OCI-LY7 (cell line): ENCODE measurements at regions of chr2 and their contacts with region 1.

Region 1: DNA sequence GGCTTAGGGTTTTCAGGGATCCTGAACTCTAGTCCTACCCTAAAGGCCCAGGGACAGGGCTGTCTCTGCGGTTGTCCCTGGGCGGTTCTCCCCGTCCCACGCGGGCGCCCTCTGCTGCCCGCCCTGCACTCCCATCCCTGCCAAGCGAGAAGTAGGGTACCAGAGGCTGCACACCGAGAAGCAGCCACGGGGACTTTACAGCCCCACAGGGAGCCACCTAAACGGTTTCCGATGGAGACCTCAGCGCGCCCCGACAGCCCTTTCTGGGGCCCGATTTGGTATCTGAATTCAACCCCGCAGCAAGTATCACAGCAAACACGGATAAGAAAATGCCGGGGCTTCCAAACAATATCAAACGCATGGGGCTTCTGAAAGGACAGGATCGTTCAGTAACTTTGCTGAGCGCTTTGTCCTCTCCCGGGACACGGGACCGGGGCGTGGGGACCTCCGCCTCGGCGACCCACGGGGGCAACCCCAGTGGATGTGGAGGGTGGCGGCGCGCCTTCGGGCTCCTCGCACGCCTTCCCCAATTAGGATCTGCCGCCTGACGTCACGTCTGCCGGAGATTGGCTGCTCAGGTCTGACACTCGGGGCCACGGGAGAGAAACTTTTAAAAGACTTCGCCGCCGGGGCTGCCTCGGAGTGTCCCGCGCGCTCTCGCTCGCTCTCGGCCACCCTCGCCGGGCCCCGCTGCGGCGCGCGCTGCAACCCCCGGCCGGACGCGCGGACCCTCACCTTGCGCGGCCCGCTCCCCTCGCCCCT is at the start of gene LTBP1:
- DNase-seq: peak; percentile 93
- H3K4me3 ChIP-seq: peak within 1 kb of the TSS; percentile 71
- H3K27ac ChIP-seq: peak within 1 kb of the TSS; percentile 78
- H3K4me1 ChIP-seq: peaks cover 61% of the 10 kb centered on the region
- CTCF ChIP-seq: peak; percentile 97
- total RNA-seq, gene LTBP1: 59.8 and 61.1 TPM in 2 replicates

Region 2: GRCh38 chr2:32402091-32402490 is 544.4 kb before region 1 on chr2:
- CTCF ChIA-PET with region 1: no interaction called
- POLR2A ChIA-PET with region 1: no interaction called
- intact Hi-C with region 1: no loop called
- DNase-seq: no peak
- H3K4me3 ChIP-seq: no peak overlapping the region
- H3K27ac ChIP-seq: no peak overlapping the region
- H3K4me1 ChIP-seq: no peaks in the 10 kb centered on the region
- CTCF ChIP-seq: no peak

Region 3: DNA sequence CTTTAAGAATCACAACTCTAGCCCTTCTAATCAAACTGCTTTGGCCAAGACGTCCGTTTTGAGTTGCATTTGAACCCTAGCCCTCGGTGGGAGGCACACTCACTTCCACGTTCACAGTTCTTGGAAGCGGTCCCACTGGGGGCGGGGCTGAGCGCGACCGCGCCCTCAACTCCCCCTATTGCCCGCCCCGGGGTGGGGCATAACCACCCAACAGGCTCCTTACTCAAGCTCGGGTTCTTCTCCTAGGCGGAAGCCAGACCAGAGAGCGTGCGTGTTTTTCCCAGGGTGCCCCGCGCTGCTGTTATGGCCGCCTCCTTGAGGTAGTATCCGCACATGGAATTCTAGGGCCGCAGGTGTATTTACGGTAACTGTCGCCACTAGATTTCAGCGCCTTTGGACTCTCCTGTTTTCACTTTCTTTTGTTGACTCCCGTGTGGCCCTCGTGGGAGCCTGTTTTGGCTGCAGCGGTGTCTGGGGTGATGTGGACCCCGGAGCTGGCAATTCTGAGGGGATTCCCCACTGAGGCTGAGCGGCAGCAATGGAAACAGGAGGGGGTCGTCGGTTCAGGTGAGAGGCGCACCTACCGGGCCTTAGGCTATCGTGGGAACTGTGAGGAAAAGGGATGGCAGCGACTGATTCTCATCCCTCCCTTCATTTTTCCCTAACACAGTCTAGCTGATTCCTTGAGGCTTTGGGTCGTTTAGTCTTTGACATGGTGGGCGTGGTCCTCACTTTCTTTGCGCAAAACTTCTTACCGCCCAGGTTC is 318.5 kb before region 1 on chr2 and contains the start of gene TTC27:
- CTCF ChIA-PET with region 1: no interaction called
- POLR2A ChIA-PET with region 1: no interaction called
- intact Hi-C with region 1: loop called (anchors 5 kb)
- DNase-seq: peak; percentile 95
- H3K4me3 ChIP-seq: peak within 1 kb of the TSS; percentile 99
- H3K27ac ChIP-seq: peak within 1 kb of the TSS; percentile 31
- H3K4me1 ChIP-seq: peaks cover 17% of the 10 kb centered on the region
- CTCF ChIP-seq: no peak
- total RNA-seq, gene TTC27: 20.0 and 27.7 TPM in 2 replicates

Region 4: DNA sequence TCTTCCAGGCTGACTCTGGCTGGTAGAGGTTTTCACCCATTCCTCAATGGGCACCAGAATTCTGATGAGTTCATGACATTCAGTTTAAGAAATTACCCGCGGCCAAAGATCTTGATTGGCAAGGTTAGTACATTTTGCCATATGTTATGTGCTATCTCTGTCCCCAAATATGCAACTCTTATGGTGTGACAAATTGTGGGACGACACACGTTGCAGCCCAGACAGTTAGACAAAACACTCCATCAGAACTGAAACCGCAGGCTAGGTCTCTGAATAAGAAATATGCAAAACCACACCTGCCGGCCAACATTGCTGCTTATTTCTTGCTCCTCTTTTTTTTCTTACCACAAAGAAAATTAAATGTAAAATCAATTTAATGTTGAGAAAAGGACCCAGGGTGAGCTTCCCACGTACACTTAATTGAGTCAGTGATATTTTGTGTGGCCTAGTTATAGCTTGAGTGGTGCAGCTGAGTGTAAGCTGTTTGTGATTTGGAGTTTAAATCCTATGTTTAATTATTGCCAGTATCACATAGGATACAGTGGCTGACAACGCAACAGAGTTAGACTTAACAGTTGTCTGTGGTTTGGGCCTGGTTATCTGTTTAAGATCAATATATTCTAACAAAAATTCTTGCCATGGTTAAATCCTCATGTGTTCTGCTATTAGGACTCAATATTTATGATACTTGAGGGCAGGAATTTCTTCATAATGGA is 35.5 kb before region 1 on chr2:
- CTCF ChIA-PET with region 1: no interaction called
- POLR2A ChIA-PET with region 1: interaction called, 3 read pairs
- intact Hi-C with region 1: loop called (anchors 1 kb)
- DNase-seq: peak; percentile 95
- H3K4me3 ChIP-seq: peak overlapping the region; percentile 53
- H3K27ac ChIP-seq: peak overlapping the region; percentile 97
- H3K4me1 ChIP-seq: peaks cover 70% of the 10 kb centered on the region
- CTCF ChIP-seq: no peak

Region 5: DNA sequence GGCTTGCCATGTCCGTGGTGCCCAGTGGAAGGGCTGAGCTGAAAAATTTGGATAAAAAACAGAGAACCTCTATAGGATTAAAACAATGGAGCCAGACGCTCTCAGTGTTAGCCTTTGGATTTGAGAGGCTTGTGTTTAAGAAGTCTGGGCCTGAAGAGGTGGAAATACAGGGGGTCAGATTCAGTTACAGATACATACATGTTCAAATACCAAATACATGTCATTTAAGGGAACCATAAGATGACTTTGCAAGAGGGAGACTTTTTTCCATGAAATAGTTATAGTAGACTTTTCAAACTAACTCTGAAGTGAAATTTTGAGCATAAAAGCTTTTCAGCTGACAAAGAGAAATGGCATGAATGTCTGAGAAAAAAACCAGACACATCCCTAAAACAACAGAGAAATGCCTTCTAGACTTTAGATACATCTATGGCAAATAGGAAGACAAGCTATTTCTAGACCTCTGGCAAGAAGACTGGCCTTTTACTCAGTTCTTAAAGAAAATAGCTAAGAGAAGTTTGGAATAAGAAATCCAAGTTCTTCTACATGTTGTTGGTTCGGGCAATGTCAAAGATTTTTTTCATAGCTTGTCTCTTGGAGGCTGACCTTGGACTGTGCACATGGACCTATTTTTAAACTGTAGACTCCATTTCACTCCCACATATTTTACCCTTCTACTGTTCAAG is 113.1 kb after region 1 on chr2:
- CTCF ChIA-PET with region 1: no interaction called
- POLR2A ChIA-PET with region 1: interaction called, 7 read pairs
- intact Hi-C with region 1: loop called (anchors 2 kb)
- DNase-seq: no peak
- H3K4me3 ChIP-seq: peak overlapping the region; percentile 54
- H3K27ac ChIP-seq: peak overlapping the region; percentile 91
- H3K4me1 ChIP-seq: peaks cover 65% of the 10 kb centered on the region
- CTCF ChIP-seq: no peak

Region 6: GRCh38 chr2:33275689-33276444 is 329.4 kb after region 1 on chr2:
- CTCF ChIA-PET with region 1: no interaction called
- POLR2A ChIA-PET with region 1: no interaction called
- intact Hi-C with region 1: loop called (anchors 2 kb)
- DNase-seq: no peak
- H3K4me3 ChIP-seq: no peak overlapping the region
- H3K27ac ChIP-seq: no peak overlapping the region
- H3K4me1 ChIP-seq: peaks cover 26% of the 10 kb centered on the region
- CTCF ChIP-seq: no peak